K562 (cell line): ENCODE measurements at regions of chr10 and their contacts with region 1.

Region 1: DNA sequence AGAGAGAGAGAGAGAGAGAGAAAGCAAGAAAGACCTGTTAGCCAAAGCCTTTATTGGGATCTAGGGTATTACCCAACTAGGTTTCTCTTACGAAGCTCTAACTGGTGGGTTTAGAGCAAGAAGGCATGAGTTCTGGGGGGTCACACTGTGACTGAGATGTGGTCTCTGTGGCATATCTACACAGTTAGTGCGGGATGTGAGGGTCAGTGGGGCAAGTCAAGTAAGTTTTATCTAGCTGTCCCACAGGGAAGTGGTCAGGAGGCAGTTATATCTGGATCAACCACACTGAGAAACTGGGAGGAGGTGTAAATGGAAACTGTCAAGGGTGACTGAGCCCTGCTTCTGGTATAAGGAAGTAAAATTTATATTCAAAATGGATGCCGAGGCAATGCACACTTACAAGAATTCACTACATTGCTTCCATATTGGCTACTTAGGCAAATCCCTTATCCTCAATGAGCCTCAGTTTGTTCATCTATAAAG is 331.6 kb upstream of the HPS1 start:
- DNase-seq: peak; percentile 19 to 92 (median 46)
- ATAC-seq: peak; percentile 92
- H3K4me3 ChIP-seq: no peak overlapping the region
- H3K27ac ChIP-seq: peak overlapping the region; percentile 89
- H3K4me1 ChIP-seq: peaks cover 0 to 50% of the 10 kb centered on the region in 2 experiments; a peak in 4 of 5 replicates
- H3K27me3 ChIP-seq: no peaks in the 10 kb centered on the region
- CTCF ChIP-seq: no peak
- EP300 ChIP-seq: peak; percentile 96
- POLR2A ChIP-seq: no peak
- RAD21 ChIP-seq: no peak

Region 2: DNA sequence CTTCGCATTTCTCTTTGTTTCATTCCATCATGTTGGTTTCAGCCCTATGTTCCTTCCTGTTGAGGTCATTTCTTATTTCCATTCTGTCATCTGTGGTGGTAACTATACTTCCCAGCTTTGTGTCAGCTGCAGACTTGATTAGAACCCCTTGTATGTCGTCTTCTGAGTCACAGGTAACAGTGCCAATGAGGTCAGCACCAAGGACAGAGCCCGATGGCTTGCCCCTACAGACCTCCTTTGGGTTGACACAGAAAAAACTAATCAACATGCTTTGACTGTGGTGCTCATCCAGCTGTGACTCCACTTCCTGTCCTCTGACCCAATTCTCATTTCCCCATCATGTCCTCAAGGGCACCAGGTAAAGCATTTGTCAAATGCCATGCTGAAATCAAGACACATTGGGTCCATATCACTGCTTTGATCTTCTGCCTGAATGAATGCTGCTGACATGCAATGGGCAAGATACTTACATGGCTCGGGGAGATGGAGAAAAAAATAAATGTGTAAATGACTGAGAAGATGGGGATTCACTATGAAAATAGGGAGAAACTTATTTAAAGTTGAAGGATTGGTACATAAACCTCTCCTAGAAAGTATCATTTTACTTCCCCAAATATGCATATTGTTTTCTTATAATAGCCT is 722.3 kb before region 1 on chr10:
- CTCF ChIA-PET with region 1: no interaction called
- POLR2A ChIA-PET with region 1: no interaction called
- in situ Hi-C with region 1: no loop called
- intact Hi-C with region 1: no loop called
- DNase-seq: peak; percentile 15 to 32 (median 17)
- ATAC-seq: no peak
- H3K4me3 ChIP-seq: no peak overlapping the region
- H3K27ac ChIP-seq: no peak overlapping the region
- H3K4me1 ChIP-seq: no peaks in the 10 kb centered on the region
- H3K27me3 ChIP-seq: peaks cover 0 to 6% of the 10 kb centered on the region in 2 experiments; a peak in 1 of 5 replicates
- CTCF ChIP-seq: no peak
- EP300 ChIP-seq: no peak
- POLR2A ChIP-seq: no peak
- RAD21 ChIP-seq: no peak

Region 3: GRCh38 chr10:98916526-98917120 is 138.3 kb after region 1 on chr10:
- CTCF ChIA-PET with region 1: no interaction called
- POLR2A ChIA-PET with region 1: no interaction called
- in situ Hi-C with region 1: no loop called
- intact Hi-C with region 1: loop called (anchors 10 kb)
- DNase-seq: peak in 2 of 4 experiments; percentile 25 to 44
- ATAC-seq: peak; percentile 69
- H3K4me3 ChIP-seq: no peak overlapping the region
- H3K27ac ChIP-seq: no peak overlapping the region
- H3K4me1 ChIP-seq: peaks cover 7 to 39% of the 10 kb centered on the region in 2 experiments; a peak in 4 of 5 replicates
- H3K27me3 ChIP-seq: no peaks in the 10 kb centered on the region
- CTCF ChIP-seq: peak; percentile 18 to 46 (median 27); a peak in 3 of 6 replicates
- EP300 ChIP-seq: no peak
- POLR2A ChIP-seq: no peak
- RAD21 ChIP-seq: peak; percentile 25 to 59; a peak in 2 of 4 replicates